ENCODE measurements at regions of chr1 and their contacts with region 1.

Region 1: DNA sequence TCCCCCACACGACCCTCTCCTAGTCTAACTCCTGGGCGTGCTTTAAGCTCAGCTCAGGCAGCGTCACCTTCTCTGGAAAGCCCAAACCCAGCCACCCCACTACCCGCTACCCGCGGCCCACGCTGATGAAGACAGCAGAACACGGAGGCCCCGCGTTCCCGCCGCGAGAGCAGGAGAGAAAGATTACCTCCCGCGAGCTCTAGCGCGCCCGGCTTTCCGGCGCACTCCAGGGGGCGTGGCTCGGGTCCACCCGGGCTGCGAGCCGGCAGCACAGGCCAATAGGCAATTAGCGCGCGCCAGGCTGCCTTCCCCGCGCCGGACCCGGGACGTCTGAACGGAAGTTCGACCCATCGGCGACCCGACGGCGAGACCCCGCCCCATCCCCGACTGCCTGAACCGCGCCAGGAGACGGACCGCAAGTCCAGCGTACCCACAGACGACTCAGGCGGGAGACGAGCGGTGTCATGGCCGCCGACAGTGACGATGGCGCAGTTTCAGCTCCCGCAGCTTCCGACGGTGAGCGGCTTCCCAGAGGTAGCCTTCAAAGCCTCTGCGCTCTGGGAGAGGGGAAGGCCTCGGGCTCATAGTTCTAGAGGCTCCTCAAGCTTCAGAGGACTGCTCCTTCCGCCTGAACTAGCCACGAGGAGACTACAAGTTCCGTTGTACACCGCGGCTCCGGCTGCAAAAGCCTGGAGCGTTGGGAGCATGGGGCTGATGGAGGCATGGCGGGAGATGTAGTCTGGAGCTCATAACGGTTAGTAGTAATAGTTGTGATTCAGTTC is at the starts of genes MUTYH and TOE1:
- DNase-seq: peak; percentile 84 to 95 (median 89)
- ATAC-seq: peak; percentile 91
- H3K4me3 ChIP-seq: peak within 1 kb of the TSS; percentile 83
- H3K4me3 Mint-ChIP-seq: peak within 1 kb of the TSS; percentile 95 to 100 (median 99)
- H3K27ac ChIP-seq: peak within 1 kb of the TSS; percentile 99
- H3K27ac Mint-ChIP-seq: peak within 1 kb of the TSS; percentile 96 to 99 (median 99)
- H3K4me1 ChIP-seq: peaks cover 31 to 33% of the 10 kb centered on the region in 2 donors
- H3K4me1 Mint-ChIP-seq: peaks cover 24 to 75% (median 61%) of the 10 kb centered on the region in 7 donors
- H3K27me3 ChIP-seq: no peaks in the 10 kb centered on the region
- H3K27me3 Mint-ChIP-seq: no peaks in the 10 kb centered on the region
- total RNA-seq, gene MUTYH: 56.7 to 85.4 (median 67.7) TPM
- total RNA-seq, gene TOE1: 20.6 to 53.3 (median 25.7) TPM

Region 2: DNA sequence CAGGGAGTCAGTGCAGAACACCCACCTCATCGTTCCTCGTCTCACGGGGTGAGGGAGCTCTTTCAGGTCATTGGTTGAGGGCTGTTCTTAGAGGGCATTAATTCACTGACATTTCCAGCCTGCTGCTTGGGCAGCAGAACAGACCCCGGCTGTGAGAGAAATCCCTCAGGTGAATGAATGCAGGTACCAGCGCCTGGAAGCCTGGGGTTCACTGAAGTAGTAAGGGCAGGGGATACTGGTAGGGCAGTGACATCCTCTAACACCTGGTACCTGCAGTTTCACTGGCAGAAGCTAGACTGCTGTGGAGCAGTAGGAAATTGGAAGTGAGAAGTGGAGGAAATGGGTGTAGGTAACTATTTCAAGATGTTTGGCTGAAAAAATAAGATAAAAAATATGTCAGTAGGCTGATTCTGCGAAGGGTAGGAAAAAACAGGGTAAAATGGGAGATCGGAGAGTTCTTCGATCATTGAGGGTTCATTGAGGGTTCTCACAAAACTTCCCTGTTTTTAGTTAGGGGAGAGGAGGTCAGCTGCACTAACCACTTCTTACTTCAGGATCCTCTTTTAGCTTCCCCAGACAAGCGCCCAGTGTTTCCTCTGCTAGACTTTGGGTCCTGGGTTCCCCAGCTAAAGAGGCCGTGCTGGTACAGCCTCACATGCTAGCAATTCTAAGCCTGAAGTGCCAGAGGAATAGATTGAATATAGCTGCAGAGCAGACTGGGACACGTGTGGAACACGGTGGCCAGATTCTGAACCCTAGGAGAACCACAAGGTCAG is 879.7 kb before region 1 on chr1:
- CTCF ChIA-PET with region 1: no interaction called
- POLR2A ChIA-PET with region 1: no interaction called
- intact Hi-C with region 1: no loop called
- DNase-seq: no peak
- ATAC-seq: peak; percentile 57
- H3K4me3 ChIP-seq: no peak overlapping the region
- H3K4me3 Mint-ChIP-seq: no peak overlapping the region
- H3K27ac ChIP-seq: no peak overlapping the region
- H3K27ac Mint-ChIP-seq: no peak overlapping the region
- H3K4me1 ChIP-seq: no peaks in the 10 kb centered on the region
- H3K4me1 Mint-ChIP-seq: peaks cover 0 to 5% (median 0%) of the 10 kb centered on the region in 7 donors
- H3K27me3 ChIP-seq: no peaks in the 10 kb centered on the region
- H3K27me3 Mint-ChIP-seq: peaks cover 43 to 54% (median 47%) of the 10 kb centered on the region in 5 donors

Region 3: DNA sequence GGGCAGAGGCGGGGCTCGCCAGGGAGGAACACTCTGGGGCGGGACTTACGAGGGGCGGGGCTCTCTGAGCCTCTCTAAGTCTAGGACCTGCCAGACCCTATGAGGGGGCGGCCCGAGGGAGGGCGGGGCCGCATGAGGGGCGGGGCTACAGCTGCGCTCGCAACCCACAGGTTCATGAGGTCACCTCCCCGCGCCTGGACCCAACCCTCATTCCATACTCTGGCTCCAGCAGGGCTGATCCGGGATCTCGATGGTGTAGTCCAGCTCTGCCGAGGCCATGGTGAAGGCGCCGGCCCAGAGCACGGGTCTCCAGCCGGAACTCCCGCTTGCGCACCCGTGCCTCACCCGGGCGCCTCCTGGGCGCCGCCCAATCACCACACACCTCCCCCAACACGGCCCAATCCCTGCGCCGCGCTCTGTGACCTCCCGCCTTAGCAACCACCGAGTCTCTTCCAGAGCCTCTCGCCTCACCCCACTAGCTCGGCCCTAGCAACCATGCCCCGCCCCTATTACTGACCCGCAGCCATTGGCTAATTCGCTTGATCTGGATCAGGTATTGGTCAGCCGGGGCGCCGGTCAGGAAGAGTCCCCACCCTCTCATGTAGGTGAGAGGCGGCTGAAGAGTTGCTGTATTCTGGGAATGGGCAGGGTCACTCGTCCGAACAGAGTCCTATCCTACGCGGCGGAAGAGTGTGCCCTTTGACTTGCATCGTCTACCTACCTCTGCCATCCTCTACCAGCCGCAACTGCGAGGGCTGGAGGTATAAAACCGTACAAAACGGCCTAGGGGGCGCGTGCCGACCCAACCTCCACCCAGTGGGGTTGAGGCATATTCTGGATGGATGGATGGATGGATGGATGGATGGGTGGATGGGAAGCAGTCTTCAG is 665.6 kb before region 1 on chr1 and contains the starts of genes ARMH1 and TMEM53:
- CTCF ChIA-PET with region 1: no interaction called
- POLR2A ChIA-PET with region 1: interaction called, 8 read pairs
- intact Hi-C with region 1: loop called in 1 of 2 experiments (anchors 1 kb)
- DNase-seq: peak; percentile 91 to 96 (median 95)
- ATAC-seq: peak; percentile 94
- H3K4me3 ChIP-seq: peak within 1 kb of the TSS; percentile 81
- H3K4me3 Mint-ChIP-seq: peak within 1 kb of the TSS; percentile 83 to 94 (median 91)
- H3K27ac ChIP-seq: peak within 1 kb of the TSS; percentile 76
- H3K27ac Mint-ChIP-seq: peak within 1 kb of the TSS; percentile 84 to 94 (median 91)
- H3K4me1 ChIP-seq: peaks cover 0 to 6% of the 10 kb centered on the region in 2 donors
- H3K4me1 Mint-ChIP-seq: peaks cover 13 to 34% (median 23%) of the 10 kb centered on the region in 7 donors
- H3K27me3 ChIP-seq: no peaks in the 10 kb centered on the region
- H3K27me3 Mint-ChIP-seq: no peaks in the 10 kb centered on the region
- total RNA-seq, gene ARMH1: 65.8 to 205 (median 87.0) TPM
- total RNA-seq, gene TMEM53: 1.6 to 3.5 (median 1.9) TPM

Region 4: DNA sequence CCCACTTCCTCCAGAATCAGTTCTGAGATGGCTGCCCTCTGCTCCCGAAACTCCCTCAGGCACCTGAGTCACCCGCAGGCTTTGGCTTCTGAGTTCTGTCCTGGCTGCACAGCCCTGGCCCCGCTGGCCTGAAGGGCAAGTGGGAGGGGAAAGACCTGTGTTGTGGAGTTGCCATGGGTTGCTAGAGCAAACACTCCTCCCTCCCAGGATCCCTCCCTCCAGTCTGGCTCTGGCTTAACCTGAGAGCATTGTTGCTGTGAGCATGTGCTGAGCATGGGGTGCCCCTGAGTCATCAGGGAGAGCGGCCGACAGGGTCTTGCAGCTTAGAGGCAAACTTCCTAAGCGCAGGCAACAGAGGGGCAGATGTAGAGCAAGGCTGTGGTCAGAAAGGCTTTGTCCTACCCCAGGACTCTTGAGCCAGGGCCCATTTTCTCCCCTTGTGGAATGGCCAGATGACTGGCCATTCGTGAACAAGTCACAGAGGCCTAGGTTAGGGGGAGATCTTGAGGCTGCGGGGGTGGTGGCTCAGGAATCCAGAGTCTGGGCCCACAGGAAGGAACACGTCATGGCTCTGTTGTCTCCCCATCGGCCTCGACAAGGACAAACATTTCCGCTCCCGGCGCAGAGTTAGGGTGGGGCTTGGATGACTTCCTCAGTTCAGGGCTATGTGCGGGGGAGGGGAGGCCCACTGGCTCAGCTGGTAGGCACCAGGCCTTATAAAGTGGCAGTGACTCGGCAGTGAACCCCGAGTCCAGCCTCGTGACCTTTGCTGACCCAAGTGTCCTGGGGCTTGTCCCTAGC is 532.5 kb before region 1 on chr1 and contains the start of gene DYNLT4:
- CTCF ChIA-PET with region 1: no interaction called
- POLR2A ChIA-PET with region 1: interaction called, 16 read pairs
- intact Hi-C with region 1: no loop called
- DNase-seq: peak; percentile 78 to 96 (median 95)
- ATAC-seq: peak; percentile 68
- H3K4me3 ChIP-seq: peak within 1 kb of the TSS; percentile 48
- H3K4me3 Mint-ChIP-seq: peak within 1 kb of the TSS; percentile 63 to 90 (median 80)
- H3K27ac ChIP-seq: peak within 1 kb of the TSS; percentile 91
- H3K27ac Mint-ChIP-seq: peak within 1 kb of the TSS; percentile 98 to 100 (median 99)
- H3K4me1 ChIP-seq: peaks cover 66 to 67% of the 10 kb centered on the region in 2 donors
- H3K4me1 Mint-ChIP-seq: peaks cover 53 to 84% (median 77%) of the 10 kb centered on the region in 7 donors
- H3K27me3 ChIP-seq: no peaks in the 10 kb centered on the region
- H3K27me3 Mint-ChIP-seq: peaks cover 0 to 3% (median 0%) of the 10 kb centered on the region in 5 donors
- total RNA-seq, gene DYNLT4: 0.31 to 9.7 (median 0.87) TPM

Region 5: DNA sequence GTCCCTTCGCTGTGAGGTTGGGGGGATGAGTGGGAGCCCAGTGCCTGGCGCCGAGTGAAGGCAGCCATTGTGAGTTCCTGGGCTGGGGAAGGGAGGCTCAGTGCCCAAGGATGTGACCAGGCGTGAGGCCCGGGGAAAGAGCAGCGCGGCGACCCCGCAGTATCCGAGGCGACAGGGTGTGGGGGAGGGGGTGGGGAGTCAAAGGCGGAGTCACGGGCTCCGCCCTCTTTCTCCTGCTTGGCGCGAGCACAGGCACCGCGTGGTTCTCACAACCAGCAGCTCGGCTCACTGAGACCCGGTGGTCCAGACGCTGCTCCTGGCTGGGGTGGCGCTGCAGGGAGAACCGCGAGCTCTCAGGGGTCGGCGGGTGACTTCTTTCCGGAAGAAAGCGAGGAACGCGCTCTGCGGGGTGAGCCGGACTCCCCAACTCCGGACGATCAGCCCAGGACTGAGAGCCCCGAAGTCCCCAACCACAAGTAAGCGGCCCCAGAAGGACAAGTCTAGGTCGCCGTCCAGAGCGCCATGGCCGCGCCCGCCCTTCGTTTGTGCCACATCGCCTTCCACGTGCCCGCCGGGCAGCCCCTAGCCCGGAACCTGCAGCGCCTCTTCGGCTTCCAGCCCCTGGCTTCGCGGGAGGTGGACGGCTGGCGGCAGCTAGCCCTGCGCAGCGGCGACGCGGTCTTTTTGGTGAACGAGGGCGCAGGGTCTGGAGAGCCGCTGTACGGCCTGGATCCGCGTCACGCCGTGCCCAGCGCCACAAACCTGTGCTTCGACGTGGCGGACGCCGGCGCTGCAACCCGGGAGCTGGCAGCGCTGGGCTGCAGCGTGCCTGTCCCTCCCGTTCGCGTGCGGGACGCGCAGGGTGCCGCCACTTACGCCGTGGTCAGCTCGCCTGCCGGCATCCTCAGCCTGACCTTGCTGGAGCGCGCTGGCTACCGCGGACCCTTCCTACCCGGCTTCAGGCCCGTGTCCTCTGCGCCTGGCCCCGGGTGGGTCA is 13.1 kb before region 1 on chr1 and contains the start of gene HPDL:
- CTCF ChIA-PET with region 1: interaction called, 3 read pairs
- POLR2A ChIA-PET with region 1: interaction called, 34 read pairs
- intact Hi-C with region 1: loop called (anchors 1 kb)
- DNase-seq: peak in 6 of 9 donors; percentile 18 to 62 (median 34)
- ATAC-seq: peak; percentile 83
- H3K4me3 ChIP-seq: peak within 1 kb of the TSS; percentile 63
- H3K4me3 Mint-ChIP-seq: peak within 1 kb of the TSS; percentile 78 to 87 (median 83)
- H3K27ac ChIP-seq: peak within 1 kb of the TSS; percentile 29
- H3K27ac Mint-ChIP-seq: peak within 1 kb of the TSS in 6 of 9 donors; percentile 32 to 73 (median 59)
- H3K4me1 ChIP-seq: peaks cover 4 to 5% of the 10 kb centered on the region in 2 donors
- H3K4me1 Mint-ChIP-seq: peaks cover 0 to 14% (median 5%) of the 10 kb centered on the region in 7 donors
- H3K27me3 ChIP-seq: no peaks in the 10 kb centered on the region
- H3K27me3 Mint-ChIP-seq: no peaks in the 10 kb centered on the region
- total RNA-seq, gene HPDL: 0.32 to 6.7 (median 0.68) TPM

Region 6: GRCh38 chr1:45521398-45522323 is 181.7 kb after region 1 on chr1 and contains the start of gene PRDX1:
- CTCF ChIA-PET with region 1: no interaction called
- POLR2A ChIA-PET with region 1: interaction called, 19 read pairs
- intact Hi-C with region 1: loop called in 1 of 2 experiments (anchors 1 kb)
- DNase-seq: peak; percentile 91 to 99 (median 93)
- ATAC-seq: peak; percentile 95
- H3K4me3 ChIP-seq: peak within 1 kb of the TSS; percentile 94
- H3K4me3 Mint-ChIP-seq: peak within 1 kb of the TSS; percentile 90 to 99 (median 94)
- H3K27ac ChIP-seq: peak within 1 kb of the TSS; percentile 87
- H3K27ac Mint-ChIP-seq: peak within 1 kb of the TSS; percentile 83 to 96 (median 91)
- H3K4me1 ChIP-seq: peaks cover 7 to 8% of the 10 kb centered on the region in 2 donors
- H3K4me1 Mint-ChIP-seq: peaks cover 14 to 56% (median 32%) of the 10 kb centered on the region in 7 donors
- H3K27me3 ChIP-seq: no peaks in the 10 kb centered on the region
- H3K27me3 Mint-ChIP-seq: peaks cover 0 to 12% (median 0%) of the 10 kb centered on the region in 5 donors
- total RNA-seq, gene PRDX1: 28.8 to 369 (median 96.3) TPM

Region 7: GRCh38 chr1:45750298-45751038 is 410.5 kb after region 1 on chr1 and contains the start of gene IPP:
- CTCF ChIA-PET with region 1: no interaction called
- POLR2A ChIA-PET with region 1: no interaction called
- intact Hi-C with region 1: loop called in 1 of 2 experiments (anchors 1 kb)
- DNase-seq: peak; percentile 81 to 96 (median 88)
- ATAC-seq: peak; percentile 94
- H3K4me3 ChIP-seq: peak within 1 kb of the TSS; percentile 81
- H3K4me3 Mint-ChIP-seq: peak within 1 kb of the TSS; percentile 90 to 98 (median 96)
- H3K27ac ChIP-seq: peak within 1 kb of the TSS; percentile 97
- H3K27ac Mint-ChIP-seq: peak within 1 kb of the TSS; percentile 95 to 100 (median 99)
- H3K4me1 ChIP-seq: peaks cover 0 to 12% of the 10 kb centered on the region in 2 donors
- H3K4me1 Mint-ChIP-seq: peaks cover 7 to 50% (median 37%) of the 10 kb centered on the region in 7 donors
- H3K27me3 ChIP-seq: no peaks in the 10 kb centered on the region
- H3K27me3 Mint-ChIP-seq: peaks cover 0 to 2% (median 0%) of the 10 kb centered on the region in 5 donors
- total RNA-seq, gene IPP: 9.1 to 19.8 (median 12.5) TPM